ENCODE measurements at regions of chr2 and their contacts with region 1.

Region 1: GRCh38 chr2:96145036-96145847 is at the start of gene DUSP2:
- DNase-seq: peak; percentile 92
- ATAC-seq: peak; percentile 58
- H3K4me3 Mint-ChIP-seq: peak within 1 kb of the TSS; percentile 93
- H3K27ac Mint-ChIP-seq: peak within 1 kb of the TSS; percentile 98
- H3K4me1 Mint-ChIP-seq: peaks cover 71% of the 10 kb centered on the region
- H3K27me3 Mint-ChIP-seq: no peaks in the 10 kb centered on the region
- CTCF ChIP-seq: no peak
- total RNA-seq, gene DUSP2: 118 and 122 TPM in 2 replicates

Region 2: GRCh38 chr2:96116879-96117697 is 28.2 kb before region 1 on chr2:
- CTCF ChIA-PET with region 1: no interaction called
- POLR2A ChIA-PET with region 1: no interaction called
- intact Hi-C with region 1: no loop called
- DNase-seq: peak; percentile 82
- ATAC-seq: peak; percentile 79
- H3K4me3 Mint-ChIP-seq: peak overlapping the region; percentile 71
- H3K27ac Mint-ChIP-seq: peak overlapping the region; percentile 41
- H3K4me1 Mint-ChIP-seq: peaks cover 25% of the 10 kb centered on the region
- H3K27me3 Mint-ChIP-seq: peaks cover 22% of the 10 kb centered on the region
- CTCF ChIP-seq: peak; percentile 56

Region 3: GRCh38 chr2:96157651-96158553 is 12.7 kb after region 1 on chr2:
- CTCF ChIA-PET with region 1: interaction called, 22 read pairs
- POLR2A ChIA-PET with region 1: interaction called, 534 read pairs
- intact Hi-C with region 1: loop called (anchors 1 kb)
- DNase-seq: peak; percentile 62
- ATAC-seq: peak; percentile 61
- H3K4me3 Mint-ChIP-seq: peak overlapping the region; percentile 69
- H3K27ac Mint-ChIP-seq: peak overlapping the region; percentile 85
- H3K4me1 Mint-ChIP-seq: peaks cover 70% of the 10 kb centered on the region
- H3K27me3 Mint-ChIP-seq: no peaks in the 10 kb centered on the region
- CTCF ChIP-seq: no peak

Region 4: GRCh38 chr2:96164459-96165184 is 19.4 kb after region 1 on chr2:
- CTCF ChIA-PET with region 1: interaction called, 22 read pairs
- POLR2A ChIA-PET with region 1: interaction called, 534 read pairs
- intact Hi-C with region 1: loop called (anchors 1 kb)
- DNase-seq: peak; percentile 43
- ATAC-seq: peak; percentile 73
- H3K4me3 Mint-ChIP-seq: peak overlapping the region; percentile 65
- H3K27ac Mint-ChIP-seq: peak overlapping the region; percentile 95
- H3K4me1 Mint-ChIP-seq: peaks cover 55% of the 10 kb centered on the region
- H3K27me3 Mint-ChIP-seq: no peaks in the 10 kb centered on the region
- CTCF ChIP-seq: no peak

Region 5: DNA sequence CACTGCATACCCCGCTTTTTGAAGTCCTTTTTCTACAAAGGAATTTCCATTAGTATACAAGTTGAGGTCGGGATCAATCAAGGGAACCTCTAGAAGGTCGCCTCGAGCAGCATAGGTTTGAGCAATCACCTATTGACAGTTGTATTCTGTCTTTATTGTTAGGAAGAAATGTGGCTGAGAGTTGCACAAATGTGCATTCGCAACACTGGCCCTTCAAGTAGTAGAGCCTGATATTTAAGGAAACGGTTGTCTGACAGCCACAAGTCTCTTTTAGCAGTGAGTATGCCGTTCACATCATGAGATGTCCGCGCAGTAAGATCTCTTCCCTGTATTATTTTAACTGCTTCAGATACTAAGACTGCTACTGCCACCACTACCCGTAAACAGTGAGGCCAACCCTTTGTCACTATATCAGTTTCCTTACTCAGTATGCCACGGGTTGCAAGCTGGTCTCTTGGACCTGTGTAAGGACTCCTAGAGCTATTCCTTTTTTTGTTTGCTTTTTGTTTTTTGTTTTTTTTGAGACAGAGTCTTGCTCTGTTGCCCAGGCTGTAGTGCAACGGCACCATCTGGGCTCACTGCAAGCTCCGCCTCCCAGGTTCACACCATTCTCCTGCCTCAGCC is 73.4 kb after region 1 on chr2:
- CTCF ChIA-PET with region 1: no interaction called
- POLR2A ChIA-PET with region 1: interaction called, 14 read pairs
- intact Hi-C with region 1: no loop called
- DNase-seq: no peak
- ATAC-seq: no peak
- H3K4me3 Mint-ChIP-seq: no peak overlapping the region
- H3K27ac Mint-ChIP-seq: no peak overlapping the region
- H3K4me1 Mint-ChIP-seq: peaks cover 5% of the 10 kb centered on the region
- H3K27me3 Mint-ChIP-seq: no peaks in the 10 kb centered on the region
- CTCF ChIP-seq: no peak

Region 6: GRCh38 chr2:96320728-96321622 is 175.7 kb after region 1 on chr2:
- CTCF ChIA-PET with region 1: no interaction called
- POLR2A ChIA-PET with region 1: interaction called, 3 read pairs
- intact Hi-C with region 1: loop called (anchors 5 kb)
- DNase-seq: peak; percentile 34
- ATAC-seq: peak; percentile 15
- H3K4me3 Mint-ChIP-seq: peak overlapping the region; percentile 94
- H3K27ac Mint-ChIP-seq: peak overlapping the region; percentile 85
- H3K4me1 Mint-ChIP-seq: peaks cover 55% of the 10 kb centered on the region
- H3K27me3 Mint-ChIP-seq: no peaks in the 10 kb centered on the region
- CTCF ChIP-seq: no peak

Region 7: DNA sequence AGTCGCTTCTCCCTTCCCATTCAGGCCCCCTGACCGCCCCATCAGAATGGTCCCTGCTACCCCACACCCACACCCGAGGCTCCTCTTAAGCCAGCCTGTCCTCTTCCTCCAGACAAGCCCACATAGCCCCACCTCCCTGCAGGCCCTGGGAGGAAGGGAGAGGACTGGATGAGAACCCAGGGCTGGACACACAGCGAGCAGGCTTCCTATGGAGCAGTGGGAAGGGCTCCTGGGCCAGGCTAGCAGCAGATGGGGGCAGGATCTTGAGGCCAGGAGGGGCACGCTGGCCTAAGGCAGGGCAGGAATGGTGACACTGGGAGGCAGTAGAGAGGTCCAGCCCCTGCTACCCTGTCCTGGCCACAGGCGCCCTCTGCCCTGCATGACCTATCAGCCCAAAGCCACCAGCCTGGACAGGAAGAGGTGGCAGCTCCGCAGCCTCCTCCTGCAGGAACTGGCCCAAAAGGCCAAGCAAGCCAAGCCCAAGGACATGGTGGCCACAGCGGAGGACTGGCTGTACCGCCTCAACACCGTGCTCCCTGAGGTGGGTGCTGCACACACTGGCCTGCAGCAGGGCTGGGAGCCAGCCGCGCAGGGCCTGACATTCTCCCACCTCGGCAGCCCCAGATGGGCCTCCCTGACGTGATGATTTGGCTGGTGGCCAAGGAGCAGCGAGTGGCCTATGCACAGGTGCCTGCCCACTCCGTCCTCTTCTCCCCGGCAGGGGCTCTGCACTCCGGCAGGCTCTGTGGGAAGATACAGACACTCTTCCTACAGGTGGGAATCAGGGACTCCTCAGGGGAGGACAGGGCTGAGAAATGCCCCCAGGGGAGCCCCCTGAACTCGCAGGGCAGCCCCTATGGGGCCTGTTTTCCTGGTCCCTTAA is 540.6 kb after region 1 on chr2:
- CTCF ChIA-PET with region 1: no interaction called
- POLR2A ChIA-PET with region 1: no interaction called
- intact Hi-C with region 1: no loop called
- DNase-seq: no peak
- ATAC-seq: no peak
- H3K4me3 Mint-ChIP-seq: no peak overlapping the region
- H3K27ac Mint-ChIP-seq: no peak overlapping the region
- H3K4me1 Mint-ChIP-seq: no peaks in the 10 kb centered on the region
- H3K27me3 Mint-ChIP-seq: peaks cover 9% of the 10 kb centered on the region
- CTCF ChIP-seq: no peak

Measured in activated B cell treated with CpG ODN at 0.5 μM for 24 hours (primary cell).